ENCODE measurements at regions of chr2 and their contacts with region 1.

Region 1: DNA sequence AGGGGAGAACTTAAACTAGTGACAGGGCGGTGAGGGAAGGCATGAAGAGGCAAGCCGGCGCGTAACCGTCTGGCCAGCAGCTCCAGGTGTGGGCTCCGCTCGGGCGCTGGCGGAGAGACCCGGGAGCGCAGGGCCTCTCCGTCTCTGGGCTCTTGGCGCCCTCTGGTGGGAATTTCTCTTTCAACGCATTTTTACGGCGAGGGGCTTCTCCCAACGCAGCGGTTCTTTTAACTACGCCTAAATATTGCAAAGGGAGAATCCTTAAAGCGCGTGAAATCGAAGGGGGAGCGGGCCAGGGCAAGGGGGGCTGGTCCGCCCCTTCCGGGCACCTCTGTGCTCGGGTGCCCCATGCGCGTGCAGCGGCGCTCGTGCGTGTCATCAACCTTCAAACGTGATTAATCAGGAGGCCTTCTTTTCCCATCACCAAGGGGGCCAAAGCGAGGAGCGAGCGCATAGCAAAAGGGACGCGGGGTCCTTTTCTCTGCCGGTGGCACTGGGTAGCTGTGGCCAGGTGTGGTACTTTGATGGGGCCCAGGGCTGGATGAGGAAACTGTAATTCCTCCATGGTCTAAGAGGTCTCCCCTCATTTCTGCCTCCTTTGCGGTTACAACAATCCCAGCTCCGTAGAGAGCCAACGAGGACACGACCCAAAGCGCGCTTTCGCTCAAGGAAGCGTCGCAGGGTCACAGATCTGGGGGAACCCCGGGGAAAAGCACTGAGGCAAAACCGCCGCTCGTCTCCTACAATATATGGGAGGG is 762 bp upstream of the GAD1 start:
- DNase-seq: peak; percentile 45 to 76 (median 75)
- ATAC-seq: peak; percentile 45 to 73
- H3K4me3 ChIP-seq: peak overlapping the region; percentile 42
- H3K27ac ChIP-seq: no peak overlapping the region
- H3K4me1 ChIP-seq: peaks cover 2% of the 10 kb centered on the region
- H3K27me3 ChIP-seq: no peaks in the 10 kb centered on the region

Region 2: DNA sequence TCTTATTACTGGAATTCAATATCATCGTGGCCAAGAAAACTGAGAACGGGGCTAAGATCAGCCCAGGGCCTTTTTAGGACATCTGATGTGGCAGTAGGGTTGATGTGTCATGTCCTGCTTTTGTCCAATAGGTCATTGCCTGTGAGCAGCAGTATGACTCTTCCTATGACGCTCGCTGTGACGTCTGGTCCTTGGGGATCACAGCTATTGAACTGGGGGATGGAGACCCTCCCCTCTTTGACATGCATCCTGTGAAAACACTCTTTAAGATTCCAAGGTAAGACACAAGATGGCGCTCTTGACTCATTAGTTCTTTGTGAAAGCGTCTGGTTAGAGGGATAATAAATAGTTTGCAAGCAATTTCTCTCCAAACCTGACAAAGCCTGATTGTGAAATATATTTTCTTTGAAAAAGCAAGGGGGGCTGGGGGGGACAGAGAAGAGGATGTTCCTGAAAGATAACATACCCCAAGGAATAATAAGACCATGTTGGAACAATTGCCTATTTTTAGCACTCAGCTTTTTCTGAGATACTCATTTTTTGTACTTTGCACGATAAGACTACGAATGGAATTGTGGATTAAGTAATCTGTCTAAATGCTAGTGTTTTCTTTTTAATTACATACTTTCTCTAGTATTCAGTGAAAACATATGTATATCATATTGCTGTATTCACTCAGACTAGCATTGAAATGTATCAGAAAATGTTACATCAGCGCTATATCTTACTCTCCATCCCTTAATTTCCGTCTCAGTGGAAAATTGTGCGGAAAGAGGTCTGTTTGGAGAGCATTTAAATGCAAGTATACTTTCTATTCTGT is 579.9 kb before region 1 on chr2:
- intact Hi-C with region 1: loop called in 2 of 4 experiments (anchors 5 to 10 kb)
- DNase-seq: peak in 1 of 3 donors; percentile 33
- ATAC-seq: peak; percentile 18 to 51
- H3K4me3 ChIP-seq: no peak overlapping the region
- H3K27ac ChIP-seq: no peak overlapping the region
- H3K4me1 ChIP-seq: no peaks in the 10 kb centered on the region
- H3K27me3 ChIP-seq: no peaks in the 10 kb centered on the region

Region 3: GRCh38 chr2:170361090-170361936 is 454.6 kb before region 1 on chr2:
- intact Hi-C with region 1: loop called (anchors 5 to 10 kb)
- DNase-seq: peak in 2 of 3 donors; percentile 24 to 48
- ATAC-seq: peak; percentile 51 to 55
- H3K4me3 ChIP-seq: no peak overlapping the region
- H3K27ac ChIP-seq: no peak overlapping the region
- H3K4me1 ChIP-seq: no peaks in the 10 kb centered on the region
- H3K27me3 ChIP-seq: peaks cover 3% of the 10 kb centered on the region

Region 4: DNA sequence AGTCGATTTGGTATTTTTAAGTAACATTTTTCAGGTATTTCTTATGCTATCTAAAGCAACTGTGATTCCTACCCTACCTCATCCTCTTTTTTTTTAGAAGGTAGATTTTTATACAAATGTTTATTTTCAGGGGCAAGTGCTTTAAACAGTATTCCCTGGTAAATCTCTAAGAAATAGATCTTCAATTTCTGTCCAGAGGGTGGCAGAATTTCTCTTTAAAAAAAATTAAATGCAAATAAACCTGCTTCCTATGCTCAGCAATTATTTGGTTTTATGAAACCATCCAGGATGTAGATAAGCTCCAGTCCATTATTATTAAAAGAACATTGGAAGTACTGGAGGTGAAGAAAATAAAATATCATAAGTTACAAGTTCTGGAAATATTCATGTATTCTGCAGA is 446.0 kb before region 1 on chr2:
- intact Hi-C with region 1: loop called (anchors 5 to 10 kb)
- DNase-seq: no peak
- ATAC-seq: no peak
- H3K4me3 ChIP-seq: no peak overlapping the region
- H3K27ac ChIP-seq: no peak overlapping the region
- H3K4me1 ChIP-seq: no peaks in the 10 kb centered on the region
- H3K27me3 ChIP-seq: peaks cover 7% of the 10 kb centered on the region

Region 5: DNA sequence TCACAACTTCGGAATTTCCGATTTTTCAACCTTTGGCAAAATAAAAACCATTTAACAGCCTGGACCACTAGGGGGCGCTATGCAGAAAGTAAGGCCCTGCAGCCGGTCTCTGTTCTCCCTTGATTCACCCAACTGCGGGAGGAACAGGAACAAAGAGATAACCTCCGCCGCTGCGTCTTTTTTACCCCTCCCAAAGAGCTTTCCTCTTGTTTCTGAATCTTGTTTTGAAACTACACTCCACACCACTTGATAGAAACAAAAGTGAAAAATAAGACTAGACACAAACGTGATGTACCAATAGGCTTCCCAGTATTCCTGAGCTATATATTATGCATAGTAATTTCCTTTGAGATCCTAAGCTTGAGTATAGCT is 406.8 kb before region 1 on chr2:
- intact Hi-C with region 1: loop called in 3 of 4 experiments (anchors 5 to 10 kb)
- DNase-seq: peak; percentile 64 to 84 (median 70)
- ATAC-seq: peak in 1 of 2 donors; percentile 62
- H3K4me3 ChIP-seq: no peak overlapping the region
- H3K27ac ChIP-seq: no peak overlapping the region
- H3K4me1 ChIP-seq: no peaks in the 10 kb centered on the region
- H3K27me3 ChIP-seq: no peaks in the 10 kb centered on the region

Region 6: DNA sequence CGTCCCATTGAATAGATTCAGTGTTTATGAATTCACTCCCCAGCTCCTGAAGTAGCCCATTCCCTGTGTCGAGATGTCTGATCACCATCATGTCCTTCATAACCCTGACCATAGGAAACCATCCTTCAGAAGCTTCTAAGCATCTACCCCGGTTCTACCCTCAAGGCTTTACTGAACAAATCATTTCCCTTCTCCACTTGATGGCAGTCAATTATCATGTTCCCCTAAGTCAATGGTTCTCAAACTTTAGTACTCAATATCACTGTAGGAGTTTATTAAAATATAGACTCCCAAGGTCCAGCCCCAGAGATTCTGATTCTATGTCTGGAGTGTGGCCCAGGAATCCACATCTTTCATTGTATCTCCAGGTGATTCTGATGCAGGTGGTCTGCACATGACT is 329.2 kb before region 1 on chr2:
- intact Hi-C with region 1: loop called in 2 of 4 experiments (anchors 5 to 10 kb)
- DNase-seq: no peak
- ATAC-seq: no peak
- H3K4me3 ChIP-seq: no peak overlapping the region
- H3K27ac ChIP-seq: no peak overlapping the region
- H3K4me1 ChIP-seq: no peaks in the 10 kb centered on the region
- H3K27me3 ChIP-seq: no peaks in the 10 kb centered on the region

Region 7: DNA sequence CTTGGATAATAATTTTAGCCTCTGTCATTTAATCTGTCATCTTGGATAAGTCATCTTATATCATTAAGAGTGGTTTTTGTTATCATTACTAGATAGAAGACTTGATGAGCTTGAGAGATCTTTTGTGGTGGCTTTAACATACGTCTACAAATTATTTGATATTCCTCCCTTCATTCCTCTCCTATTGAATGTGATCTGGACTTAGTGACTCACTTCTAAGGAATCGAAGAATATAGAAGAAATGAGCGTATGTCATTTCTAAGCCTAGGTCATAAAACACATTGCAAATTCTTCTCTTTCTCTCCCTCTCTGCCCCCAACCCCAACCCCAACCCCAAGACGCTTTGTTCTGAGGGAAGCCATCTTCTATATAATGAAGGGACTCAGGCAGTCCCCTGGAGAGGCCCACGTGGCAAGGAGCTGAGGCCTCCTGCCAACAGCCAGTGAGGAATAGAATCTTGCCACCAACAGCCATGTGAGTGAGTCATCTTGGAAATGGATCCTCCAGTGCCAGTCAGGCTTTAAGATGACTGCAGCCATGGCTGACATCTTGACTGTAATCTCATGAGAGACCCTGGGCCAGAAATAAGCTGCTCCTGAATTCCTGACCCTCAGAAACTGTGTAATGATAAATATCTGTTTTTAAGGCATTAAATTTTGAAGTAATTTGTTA is 322.4 kb before region 1 on chr2:
- intact Hi-C with region 1: loop called in 2 of 4 experiments (anchors 5 to 10 kb)
- DNase-seq: no peak
- ATAC-seq: no peak
- H3K4me3 ChIP-seq: no peak overlapping the region
- H3K27ac ChIP-seq: no peak overlapping the region
- H3K4me1 ChIP-seq: no peaks in the 10 kb centered on the region
- H3K27me3 ChIP-seq: no peaks in the 10 kb centered on the region